ENCODE measurements at regions of chr3 and their contacts with region 1.

Region 1: DNA sequence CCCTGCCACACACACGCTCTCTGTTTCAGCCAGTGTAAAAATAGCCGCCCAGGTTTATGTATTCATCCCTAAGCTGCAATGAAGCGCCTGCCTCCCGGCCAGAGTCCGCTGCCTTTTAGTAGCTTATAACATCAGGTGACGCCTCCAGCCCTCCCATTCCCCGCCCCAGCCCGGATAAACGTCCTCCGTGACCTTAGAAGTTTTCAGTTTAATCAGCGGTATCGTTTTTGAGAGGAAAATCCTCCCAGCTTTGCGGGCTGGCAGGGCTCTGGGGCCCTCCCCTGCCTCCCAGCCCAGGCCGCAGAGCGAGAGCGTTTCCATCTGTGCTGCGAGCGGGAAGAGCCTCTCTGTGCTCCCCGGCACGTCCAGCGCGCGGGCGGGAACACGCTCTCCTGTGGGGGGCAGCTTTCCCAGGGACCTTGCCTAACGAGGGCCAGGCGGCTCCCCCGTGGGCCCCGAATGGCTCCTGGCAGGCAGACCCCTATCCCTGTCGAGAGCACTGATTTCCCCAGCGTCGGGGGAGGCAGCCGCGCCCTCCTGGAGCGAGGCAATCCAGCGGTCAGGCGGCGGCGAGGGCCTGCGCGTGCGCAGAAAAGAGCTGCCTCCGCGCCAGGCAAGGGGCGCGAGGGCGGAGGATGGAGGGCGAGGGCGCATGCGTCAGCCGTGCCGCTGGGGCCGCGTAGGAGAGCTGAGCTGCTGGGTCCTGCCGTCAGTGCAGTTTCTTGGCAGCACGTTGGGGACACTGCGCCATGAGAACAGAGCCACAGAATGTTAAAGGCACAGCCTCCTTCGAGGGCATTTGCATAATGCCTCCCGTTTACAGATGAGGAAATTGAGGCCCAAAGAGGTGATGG is 71.1 kb downstream of the CCNL1 start:
- DNase-seq: peak; percentile 93
- ATAC-seq: peak; percentile 91
- H3K4me3 ChIP-seq: peak overlapping the region; percentile 52
- H3K27ac ChIP-seq: peak overlapping the region; percentile 97
- H3K4me1 ChIP-seq: peaks cover 53% of the 10 kb centered on the region
- H3K27me3 ChIP-seq: no peaks in the 10 kb centered on the region
- CTCF ChIP-seq: peak in 1 of 3 experiments; percentile 2; a peak in 1 of 6 replicates
- EP300 ChIP-seq: peak; percentile 41 to 58
- POLR2A ChIP-seq: peak; percentile 91
- RAD21 ChIP-seq: no peak

Region 2: DNA sequence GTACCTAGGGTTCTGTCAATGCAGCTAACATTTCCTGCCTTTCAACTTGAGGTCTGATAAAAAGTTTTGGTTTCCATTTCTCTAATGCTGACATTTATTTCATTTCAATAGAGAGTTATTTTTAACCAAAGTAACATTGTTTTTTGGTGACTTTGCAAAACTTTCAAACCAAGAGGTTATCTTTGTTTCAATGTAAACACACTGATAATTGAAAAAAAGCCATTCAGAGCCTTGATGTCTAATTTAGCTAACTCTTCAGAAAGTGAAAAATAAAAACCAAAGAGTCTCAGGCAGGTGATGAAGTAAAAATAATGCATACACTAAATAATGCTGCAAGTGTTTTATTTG is 424.0 kb before region 1 on chr3:
- CTCF ChIA-PET with region 1: interaction called, 199 read pairs
- POLR2A ChIA-PET with region 1: interaction called, 6 read pairs
- RAD21 ChIA-PET with region 1: interaction called, 10 read pairs
- SMC1A ChIA-PET with region 1: interaction called, 4 read pairs
- in situ Hi-C with region 1: no loop called
- intact Hi-C with region 1: no loop called
- DNase-seq: no peak
- ATAC-seq: peak; percentile 78
- H3K4me3 ChIP-seq: no peak overlapping the region
- H3K27ac ChIP-seq: peak overlapping the region; percentile 97
- H3K4me1 ChIP-seq: peaks cover 55% of the 10 kb centered on the region
- H3K27me3 ChIP-seq: no peaks in the 10 kb centered on the region
- CTCF ChIP-seq: no peak
- EP300 ChIP-seq: peak; percentile 69 to 92; a peak in 3 of 4 replicates
- POLR2A ChIP-seq: no peak
- RAD21 ChIP-seq: no peak

Region 3: GRCh38 chr3:156816800-156817645 is 271.8 kb before region 1 on chr3:
- CTCF ChIA-PET with region 1: interaction called, 3 read pairs
- POLR2A ChIA-PET with region 1: interaction called, 8 read pairs
- RAD21 ChIA-PET with region 1: interaction called, 4 read pairs
- SMC1A ChIA-PET with region 1: interaction called, 7 read pairs
- in situ Hi-C with region 1: no loop called
- intact Hi-C with region 1: loop called (anchors 2 kb)
- DNase-seq: peak; percentile 55
- ATAC-seq: peak; percentile 78
- H3K4me3 ChIP-seq: peak overlapping the region; percentile 85
- H3K27ac ChIP-seq: peak overlapping the region; percentile 95
- H3K4me1 ChIP-seq: peaks cover 27% of the 10 kb centered on the region
- H3K27me3 ChIP-seq: no peaks in the 10 kb centered on the region
- CTCF ChIP-seq: peak; percentile 11 to 34 (median 21); a peak in 3 of 6 replicates
- EP300 ChIP-seq: peak; percentile 99 to 100
- POLR2A ChIP-seq: peak; percentile 94
- RAD21 ChIP-seq: peak; percentile 30

Region 4: DNA sequence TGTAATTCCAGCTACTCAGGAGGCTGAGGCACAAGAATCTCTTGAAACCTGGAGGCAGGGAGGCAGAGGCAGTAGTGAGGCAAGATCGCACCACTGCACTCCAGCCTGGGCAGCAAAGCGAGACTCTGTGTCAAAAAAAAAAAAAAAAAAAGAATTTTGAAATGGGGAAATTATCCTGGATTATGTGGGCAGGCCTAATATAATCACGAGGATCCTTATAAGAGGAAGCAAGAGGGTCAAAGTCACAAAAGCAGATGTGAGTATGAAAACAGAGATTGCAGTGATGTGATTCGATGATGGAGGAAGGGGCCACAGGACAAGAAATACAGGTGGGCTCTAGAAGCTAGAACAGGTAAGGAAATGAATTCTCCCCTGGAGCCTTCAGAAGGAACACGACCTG is 103.1 kb before region 1 on chr3:
- CTCF ChIA-PET with region 1: no interaction called
- POLR2A ChIA-PET with region 1: no interaction called
- RAD21 ChIA-PET with region 1: no interaction called
- SMC1A ChIA-PET with region 1: no interaction called
- in situ Hi-C with region 1: no loop called
- intact Hi-C with region 1: no loop called
- DNase-seq: no peak
- ATAC-seq: no peak
- H3K4me3 ChIP-seq: no peak overlapping the region
- H3K27ac ChIP-seq: no peak overlapping the region
- H3K4me1 ChIP-seq: no peaks in the 10 kb centered on the region
- H3K27me3 ChIP-seq: no peaks in the 10 kb centered on the region
- CTCF ChIP-seq: no peak
- EP300 ChIP-seq: no peak
- POLR2A ChIP-seq: no peak
- RAD21 ChIP-seq: no peak

Region 5: GRCh38 chr3:157104928-157105652 is 16.3 kb after region 1 on chr3:
- CTCF ChIA-PET with region 1: interaction called, 144 read pairs
- POLR2A ChIA-PET with region 1: interaction called, 84 read pairs
- RAD21 ChIA-PET with region 1: interaction called, 119 read pairs
- SMC1A ChIA-PET with region 1: interaction called, 234 read pairs
- in situ Hi-C with region 1: no loop called
- intact Hi-C with region 1: no loop called
- DNase-seq: no peak
- ATAC-seq: peak; percentile 71
- H3K4me3 ChIP-seq: no peak overlapping the region
- H3K27ac ChIP-seq: peak overlapping the region; percentile 63; the same call in 1 of the 2 replicates
- H3K4me1 ChIP-seq: peaks cover 31% of the 10 kb centered on the region
- H3K27me3 ChIP-seq: no peaks in the 10 kb centered on the region
- CTCF ChIP-seq: no peak
- EP300 ChIP-seq: no peak
- POLR2A ChIP-seq: no peak
- RAD21 ChIP-seq: no peak

Region 6: GRCh38 chr3:157136647-157137387 is 48.0 kb after region 1 on chr3:
- CTCF ChIA-PET with region 1: interaction called, 939 read pairs
- POLR2A ChIA-PET with region 1: interaction called, 6 read pairs
- RAD21 ChIA-PET with region 1: interaction called, 153 read pairs
- SMC1A ChIA-PET with region 1: interaction called, 98 read pairs
- in situ Hi-C with region 1: no loop called
- intact Hi-C with region 1: loop called (anchors 1 kb)
- DNase-seq: no peak
- ATAC-seq: no peak; the same call in 1 of the 3 replicates
- H3K4me3 ChIP-seq: no peak overlapping the region
- H3K27ac ChIP-seq: no peak overlapping the region
- H3K4me1 ChIP-seq: peaks cover 10% of the 10 kb centered on the region
- H3K27me3 ChIP-seq: no peaks in the 10 kb centered on the region
- CTCF ChIP-seq: no peak
- EP300 ChIP-seq: no peak
- POLR2A ChIP-seq: no peak
- RAD21 ChIP-seq: no peak

Measured in GM12878 (cell line).